GM10248 (cell line): ENCODE measurements at regions of chr14 and their contacts with region 1.

Region 1: GRCh38 chr14:71714225-71714624 is 218.0 kb upstream of the RGS6 start:
- DNase-seq: no peak
- CTCF ChIP-seq: no peak

Region 2: GRCh38 chr14:71703477-71703876 is 10.7 kb before region 1 on chr14:
- CTCF ChIA-PET with region 1: interaction called, 11 read pairs
- POLR2A ChIA-PET with region 1: no interaction called
- DNase-seq: no peak
- CTCF ChIP-seq: no peak

Region 3: GRCh38 chr14:71956920-71957563 is 242.8 kb after region 1 on chr14:
- CTCF ChIA-PET with region 1: no interaction called
- POLR2A ChIA-PET with region 1: no interaction called
- DNase-seq: peak; percentile 18
- CTCF ChIP-seq: no peak